K562 (cell line): ENCODE measurements at regions of chr21 and their contacts with region 1.

Region 1: GRCh38 chr21:33729641-33730040 is 87.3 kb downstream of the ITSN1 start:
- DNase-seq: no peak
- ATAC-seq: no peak
- H3K4me3 ChIP-seq: no peak overlapping the region
- H3K27ac ChIP-seq: no peak overlapping the region
- H3K4me1 ChIP-seq: peaks cover 0 to 3% of the 10 kb centered on the region in 2 experiments; a peak in 1 of 5 replicates
- H3K27me3 ChIP-seq: 0 out of 5 replicates have a peak, but pooled peaks cover 0 to 2% of the 10 kb centered on the region in 2 experiments
- CTCF ChIP-seq: no peak
- EP300 ChIP-seq: no peak
- POLR2A ChIP-seq: no peak
- RAD21 ChIP-seq: no peak

Region 2: DNA sequence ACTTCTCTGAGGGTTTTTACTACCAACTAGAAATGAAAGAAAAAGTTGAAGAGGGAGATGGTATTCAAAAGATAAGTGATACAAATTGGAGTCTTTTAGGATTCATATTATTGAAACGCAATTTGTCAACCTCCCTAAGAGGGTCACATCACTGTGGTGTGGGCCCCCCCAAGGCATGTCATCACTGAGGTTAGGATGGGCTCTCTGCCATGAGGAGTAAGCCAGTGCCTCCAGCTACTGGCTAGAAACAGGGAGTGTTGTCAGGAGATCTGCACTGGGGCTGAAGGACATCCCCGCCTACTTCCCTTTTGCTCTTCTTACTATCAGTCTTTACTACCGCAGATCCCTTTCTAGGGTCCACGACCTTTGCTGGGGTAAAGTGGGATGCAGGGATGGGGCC is 61.5 kb before region 1 on chr21:
- CTCF ChIA-PET with region 1: no interaction called
- POLR2A ChIA-PET with region 1: no interaction called
- in situ Hi-C with region 1: no loop called
- intact Hi-C with region 1: no loop called
- DNase-seq: peak in 1 of 4 experiments; percentile 26
- ATAC-seq: peak; percentile 36; the same call in 1 of the 3 replicates
- H3K4me3 ChIP-seq: no peak overlapping the region
- H3K27ac ChIP-seq: no peak overlapping the region
- H3K4me1 ChIP-seq: no peaks in the 10 kb centered on the region
- H3K27me3 ChIP-seq: peaks cover 4 to 10% of the 10 kb centered on the region in 2 experiments; a peak in 4 of 5 replicates
- CTCF ChIP-seq: no peak
- EP300 ChIP-seq: no peak
- POLR2A ChIP-seq: no peak
- RAD21 ChIP-seq: no peak

Region 3: GRCh38 chr21:33871171-33871570 is 141.5 kb after region 1 on chr21:
- CTCF ChIA-PET with region 1: no interaction called
- POLR2A ChIA-PET with region 1: no interaction called
- in situ Hi-C with region 1: no loop called
- intact Hi-C with region 1: loop called (anchors 10 kb)
- DNase-seq: no peak
- ATAC-seq: no peak
- H3K4me3 ChIP-seq: no peak overlapping the region
- H3K27ac ChIP-seq: no peak overlapping the region
- H3K4me1 ChIP-seq: no peaks in the 10 kb centered on the region; a peak in 1 of 5 replicates
- H3K27me3 ChIP-seq: peaks cover 10 to 20% of the 10 kb centered on the region in 2 experiments; a peak in 4 of 5 replicates
- CTCF ChIP-seq: no peak
- EP300 ChIP-seq: no peak
- POLR2A ChIP-seq: no peak
- RAD21 ChIP-seq: no peak